Activated CD8-positive, alpha-beta T cell treated with anti-CD3 and anti-CD28 coated beads for 36 hours (primary cell): ENCODE measurements at regions of chr9 and their contacts with region 1.

Region 1: GRCh38 chr9:123349691-123350480 is 6.1 kb upstream of the CRB2 start:
- DNase-seq: peak; percentile 77
- ATAC-seq: peak; percentile 88
- H3K4me3 Mint-ChIP-seq: no peak overlapping the region
- H3K27ac Mint-ChIP-seq: no peak overlapping the region
- H3K4me1 Mint-ChIP-seq: peaks cover 4% of the 10 kb centered on the region
- H3K27me3 Mint-ChIP-seq: peaks cover 9% of the 10 kb centered on the region
- CTCF ChIP-seq: peak; percentile 96

Region 2: GRCh38 chr9:123091459-123091858 is 258.4 kb before region 1 on chr9:
- CTCF ChIA-PET with region 1: interaction called, 18 read pairs
- POLR2A ChIA-PET with region 1: interaction called, 4 read pairs
- intact Hi-C with region 1: no loop called
- DNase-seq: no peak
- ATAC-seq: no peak
- H3K4me3 Mint-ChIP-seq: no peak overlapping the region
- H3K27ac Mint-ChIP-seq: no peak overlapping the region
- H3K4me1 Mint-ChIP-seq: no peaks in the 10 kb centered on the region
- H3K27me3 Mint-ChIP-seq: no peaks in the 10 kb centered on the region
- CTCF ChIP-seq: no peak

Region 3: DNA sequence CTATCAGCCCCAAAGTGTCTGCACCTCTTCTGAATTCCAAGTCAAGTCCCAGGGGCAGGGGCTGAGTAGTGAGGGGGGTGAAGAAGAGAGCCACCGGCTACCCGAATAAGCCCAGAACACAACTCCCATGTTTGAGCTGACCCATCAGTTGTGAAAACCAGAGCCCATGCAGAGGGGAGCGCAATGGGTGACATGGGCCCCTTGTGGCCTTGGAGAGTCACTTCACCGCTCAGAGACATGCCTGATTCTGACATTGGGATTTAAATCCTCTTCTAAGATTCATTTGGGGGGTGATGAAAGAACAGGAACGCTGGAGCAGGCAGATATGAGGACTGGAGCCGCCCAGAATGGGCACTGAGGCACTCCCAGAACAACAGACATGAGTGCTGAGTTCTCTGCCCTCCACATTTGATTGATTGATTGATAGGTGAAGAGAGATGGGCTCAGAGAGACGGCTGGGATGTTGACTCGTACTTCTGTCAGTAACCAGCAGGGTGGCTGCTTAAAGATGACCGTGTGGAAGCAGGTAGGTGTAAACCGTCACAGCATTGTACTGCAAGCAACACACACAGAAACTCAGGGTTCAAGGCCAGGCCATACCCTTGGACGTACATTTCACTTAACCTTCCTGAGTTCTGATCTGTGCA is 242.1 kb before region 1 on chr9:
- CTCF ChIA-PET with region 1: interaction called, 44 read pairs
- POLR2A ChIA-PET with region 1: interaction called, 3 read pairs
- intact Hi-C with region 1: no loop called
- DNase-seq: no peak
- ATAC-seq: no peak
- H3K4me3 Mint-ChIP-seq: no peak overlapping the region
- H3K27ac Mint-ChIP-seq: no peak overlapping the region
- H3K4me1 Mint-ChIP-seq: peaks cover 10% of the 10 kb centered on the region
- H3K27me3 Mint-ChIP-seq: no peaks in the 10 kb centered on the region
- CTCF ChIP-seq: no peak

Region 4: GRCh38 chr9:123232016-123232731 is 117.7 kb before region 1 on chr9:
- CTCF ChIA-PET with region 1: interaction called, 12 read pairs
- POLR2A ChIA-PET with region 1: no interaction called
- intact Hi-C with region 1: no loop called
- DNase-seq: no peak
- ATAC-seq: no peak
- H3K4me3 Mint-ChIP-seq: no peak overlapping the region
- H3K27ac Mint-ChIP-seq: no peak overlapping the region
- H3K4me1 Mint-ChIP-seq: peaks cover 16% of the 10 kb centered on the region
- H3K27me3 Mint-ChIP-seq: no peaks in the 10 kb centered on the region
- CTCF ChIP-seq: no peak

Region 5: GRCh38 chr9:123338710-123339665 is 10.9 kb before region 1 on chr9:
- CTCF ChIA-PET with region 1: interaction called, 21 read pairs
- POLR2A ChIA-PET with region 1: no interaction called
- intact Hi-C with region 1: no loop called
- DNase-seq: peak; percentile 94
- ATAC-seq: peak; percentile 75
- H3K4me3 Mint-ChIP-seq: peak overlapping the region; percentile 74
- H3K27ac Mint-ChIP-seq: peak overlapping the region; percentile 99
- H3K4me1 Mint-ChIP-seq: peaks cover 46% of the 10 kb centered on the region
- H3K27me3 Mint-ChIP-seq: no peaks in the 10 kb centered on the region
- CTCF ChIP-seq: no peak

Region 6: DNA sequence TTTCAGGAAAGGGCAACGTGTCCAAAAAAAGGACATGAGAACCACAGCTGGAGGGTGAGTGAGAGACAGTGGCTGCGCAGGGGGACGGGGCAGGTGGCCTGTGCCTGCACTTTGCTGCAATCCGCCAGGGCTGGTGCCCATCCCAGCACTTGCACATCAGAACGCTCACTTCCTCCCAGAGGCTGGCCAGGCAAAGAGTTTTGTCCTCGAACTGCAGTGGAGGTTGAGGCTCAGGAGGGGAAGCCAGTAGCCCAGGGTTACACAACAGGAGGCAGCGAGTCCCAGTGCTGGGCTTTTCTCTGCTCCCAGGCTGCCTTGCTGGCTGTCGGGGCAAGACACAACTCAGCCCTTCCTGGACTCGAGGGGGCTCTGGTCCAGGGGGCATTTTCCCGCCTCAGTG is 39.2 kb after region 1 on chr9:
- CTCF ChIA-PET with region 1: interaction called, 42 read pairs
- POLR2A ChIA-PET with region 1: interaction called, 5 read pairs
- intact Hi-C with region 1: loop called (anchors 5 kb)
- DNase-seq: no peak
- ATAC-seq: no peak
- H3K4me3 Mint-ChIP-seq: no peak overlapping the region
- H3K27ac Mint-ChIP-seq: no peak overlapping the region
- H3K4me1 Mint-ChIP-seq: peaks cover 3% of the 10 kb centered on the region
- H3K27me3 Mint-ChIP-seq: no peaks in the 10 kb centered on the region
- CTCF ChIP-seq: no peak

Region 7: GRCh38 chr9:123457583-123457982 is 107.7 kb after region 1 on chr9:
- CTCF ChIA-PET with region 1: no interaction called
- POLR2A ChIA-PET with region 1: no interaction called
- intact Hi-C with region 1: no loop called
- DNase-seq: no peak
- ATAC-seq: no peak
- H3K4me3 Mint-ChIP-seq: no peak overlapping the region
- H3K27ac Mint-ChIP-seq: no peak overlapping the region
- H3K4me1 Mint-ChIP-seq: no peaks in the 10 kb centered on the region
- H3K27me3 Mint-ChIP-seq: no peaks in the 10 kb centered on the region
- CTCF ChIP-seq: no peak